Dendritic cell treated with granulocyte-macrophage colony-stimulating factor and Interleukin-4, amounts not matched to agents 40 ng/mL and 50 ng/mL, for 4 days (primary cell): ENCODE measurements at regions of chr4 and their contacts with region 1.

Region 1: DNA sequence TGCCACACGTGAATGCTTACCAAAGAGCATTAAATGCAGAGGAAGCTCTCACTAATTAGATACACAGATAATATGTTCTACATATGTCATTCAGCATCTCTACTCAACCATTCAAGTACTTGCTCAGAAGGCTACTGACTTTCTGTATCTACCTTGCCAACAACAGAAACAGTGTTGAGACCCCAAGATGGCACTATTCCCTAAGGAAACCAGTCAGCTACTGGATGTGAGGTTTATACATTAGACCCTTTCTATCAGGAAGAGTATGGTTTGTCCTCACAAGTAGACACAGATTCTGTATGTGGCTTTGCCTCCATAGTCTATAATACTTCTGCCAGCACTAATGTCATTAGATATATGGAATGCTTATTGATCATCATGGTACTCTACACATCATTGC is 443.9 kb upstream of the INTU start:
- H3K4me3 Mint-ChIP-seq: no peak overlapping the region
- H3K27ac Mint-ChIP-seq: no peak overlapping the region
- H3K4me1 Mint-ChIP-seq: no peaks in the 10 kb centered on the region
- H3K27me3 Mint-ChIP-seq: no peaks in the 10 kb centered on the region

Region 2: DNA sequence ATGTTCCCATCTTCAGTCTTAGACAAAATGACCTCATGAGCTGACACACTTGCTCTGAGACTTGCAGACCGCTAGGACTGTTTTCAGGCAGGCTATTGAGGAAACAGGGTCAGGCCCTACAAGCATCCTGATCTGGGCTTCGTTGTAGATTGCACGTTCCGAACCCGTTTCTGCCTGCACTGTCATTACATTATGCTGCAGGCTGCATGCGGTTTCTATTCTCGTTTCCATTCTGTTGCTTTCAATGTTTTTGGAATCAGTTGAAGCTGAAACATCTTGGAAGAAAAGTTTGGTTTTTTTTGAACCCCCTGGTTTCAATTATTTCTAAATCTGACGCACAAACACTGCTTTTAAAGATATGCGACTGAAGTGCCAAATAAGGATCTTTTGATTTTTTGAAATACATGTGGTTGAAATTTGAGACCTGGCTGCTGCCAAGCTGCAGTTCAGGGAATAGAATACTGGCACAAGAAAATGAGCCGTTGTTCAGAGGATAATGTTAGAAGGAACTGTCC is 272.2 kb before region 1 on chr4:
- intact Hi-C with region 1: no loop called
- H3K4me3 Mint-ChIP-seq: no peak overlapping the region
- H3K27ac Mint-ChIP-seq: no peak overlapping the region
- H3K4me1 Mint-ChIP-seq: no peaks in the 10 kb centered on the region
- H3K27me3 Mint-ChIP-seq: no peaks in the 10 kb centered on the region

Region 3: DNA sequence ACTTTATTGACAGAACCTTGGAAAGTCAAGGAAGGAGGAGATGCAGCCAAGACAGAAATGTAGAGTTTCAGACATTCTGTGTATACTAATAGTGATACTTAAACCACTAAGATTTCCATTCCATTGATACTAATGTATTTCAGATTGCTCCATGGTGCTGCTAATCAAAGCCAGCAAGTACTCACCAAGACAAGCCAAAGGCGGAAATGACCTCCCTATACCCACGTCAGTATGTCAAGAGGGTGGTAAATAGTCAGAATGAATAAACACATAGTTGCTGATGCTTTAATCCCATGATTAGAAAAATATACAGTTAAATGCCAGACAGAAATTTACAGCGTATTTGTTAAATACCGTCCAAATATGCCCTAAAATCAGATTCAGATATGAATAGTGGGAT is 26.1 kb after region 1 on chr4:
- intact Hi-C with region 1: loop called (anchors 1 kb)
- H3K4me3 Mint-ChIP-seq: no peak overlapping the region
- H3K27ac Mint-ChIP-seq: no peak overlapping the region
- H3K4me1 Mint-ChIP-seq: no peaks in the 10 kb centered on the region
- H3K27me3 Mint-ChIP-seq: no peaks in the 10 kb centered on the region

Region 4: DNA sequence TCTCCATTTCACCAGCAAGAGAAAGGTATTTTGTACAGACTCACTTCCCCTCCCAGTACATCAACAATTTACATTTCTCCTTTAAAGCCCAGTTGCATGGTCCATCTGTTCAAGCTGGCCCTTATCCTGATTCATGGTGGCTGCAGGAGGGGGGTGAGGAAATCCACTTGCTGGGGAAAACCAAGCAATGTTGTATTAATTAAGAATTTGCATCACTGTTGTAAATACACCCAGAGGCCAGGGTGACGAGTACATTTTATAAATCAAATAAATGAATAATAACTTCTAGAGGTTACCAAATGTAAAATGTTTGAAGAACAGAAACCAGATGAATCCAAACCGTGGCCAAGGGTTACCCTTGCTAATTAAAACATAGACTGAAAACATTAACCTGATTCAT is 48.0 kb after region 1 on chr4:
- intact Hi-C with region 1: no loop called
- H3K4me3 Mint-ChIP-seq: no peak overlapping the region
- H3K27ac Mint-ChIP-seq: no peak overlapping the region
- H3K4me1 Mint-ChIP-seq: no peaks in the 10 kb centered on the region
- H3K27me3 Mint-ChIP-seq: no peaks in the 10 kb centered on the region

Region 5: GRCh38 chr4:127284236-127284635 is 95.4 kb after region 1 on chr4:
- intact Hi-C with region 1: no loop called
- H3K4me3 Mint-ChIP-seq: no peak overlapping the region
- H3K27ac Mint-ChIP-seq: no peak overlapping the region
- H3K4me1 Mint-ChIP-seq: no peaks in the 10 kb centered on the region
- H3K27me3 Mint-ChIP-seq: no peaks in the 10 kb centered on the region

Region 6: DNA sequence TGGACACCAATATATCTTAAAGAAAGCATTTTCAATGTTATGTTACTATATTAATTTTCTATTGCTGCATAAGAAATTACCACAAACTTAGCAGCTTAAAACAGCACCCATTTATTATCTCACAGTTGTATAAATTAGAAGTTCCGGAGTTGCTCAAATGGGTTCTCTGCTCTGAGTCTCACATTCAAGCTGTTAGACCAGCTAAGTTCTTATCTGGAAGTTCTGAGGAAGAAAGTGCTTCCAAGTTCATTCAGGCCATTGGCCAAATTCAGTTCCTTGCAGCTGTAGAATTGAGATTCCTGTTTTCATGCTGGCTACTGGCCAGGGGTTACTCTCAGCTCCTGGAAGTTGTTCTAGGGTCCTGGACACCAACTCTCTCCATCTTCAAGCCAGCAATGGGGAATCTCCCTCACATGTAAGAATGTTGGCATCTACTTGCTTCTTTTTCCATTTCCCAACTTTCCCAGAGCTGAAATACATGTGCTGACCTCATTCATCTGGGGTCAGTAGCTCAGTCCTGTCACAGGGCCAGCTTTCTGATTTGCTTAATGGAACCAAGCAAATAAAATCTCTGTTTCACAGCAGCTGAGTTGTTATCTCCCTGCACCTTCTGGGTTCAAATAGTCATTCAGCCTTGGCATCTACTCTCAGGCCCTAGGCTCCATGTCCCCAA is 344.3 kb after region 1 on chr4:
- intact Hi-C with region 1: no loop called
- H3K4me3 Mint-ChIP-seq: no peak overlapping the region
- H3K27ac Mint-ChIP-seq: no peak overlapping the region
- H3K4me1 Mint-ChIP-seq: no peaks in the 10 kb centered on the region
- H3K27me3 Mint-ChIP-seq: no peaks in the 10 kb centered on the region